ENCODE measurements at regions of chr2 and their contacts with region 1.

Region 1: DNA sequence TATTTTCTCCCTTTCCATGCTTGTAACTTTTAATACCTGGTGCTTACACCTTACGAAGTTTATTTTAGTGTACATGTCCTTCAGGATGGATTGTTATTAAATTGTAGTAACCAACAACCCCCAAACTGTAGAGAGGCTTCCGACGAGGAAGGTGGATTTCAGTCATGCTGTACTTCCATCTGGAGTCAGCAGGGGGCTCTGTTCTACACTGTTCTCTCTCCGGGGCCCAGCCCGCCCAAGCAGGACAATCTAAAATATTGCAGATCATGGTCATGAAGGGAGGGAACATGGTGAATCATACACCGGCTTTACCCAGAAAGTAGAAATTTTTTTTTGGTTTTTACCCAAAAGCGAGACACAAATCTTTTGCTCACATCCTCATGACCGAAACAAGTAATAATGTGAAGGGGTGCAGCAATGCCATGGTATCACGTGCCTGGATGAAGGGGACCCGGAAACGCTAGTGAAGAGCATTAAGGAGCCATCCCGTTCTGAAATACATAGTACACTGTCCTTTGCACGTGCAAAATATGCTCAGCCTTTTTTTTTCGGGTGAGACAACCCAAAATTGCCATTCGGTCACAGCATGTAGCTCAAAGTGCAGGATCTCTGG is 884.8 kb downstream of the EPHA4 start:
- DNase-seq: peak; percentile 61 to 67
- H3K4me3 ChIP-seq: no peak overlapping the region
- H3K27ac ChIP-seq: no peak overlapping the region
- H3K4me1 ChIP-seq: no peaks in the 10 kb centered on the region
- H3K27me3 ChIP-seq: no peaks in the 10 kb centered on the region
- CTCF ChIP-seq: peak; percentile 65 to 75 (median 73)
- POLR2A ChIP-seq: no peak

Region 2: DNA sequence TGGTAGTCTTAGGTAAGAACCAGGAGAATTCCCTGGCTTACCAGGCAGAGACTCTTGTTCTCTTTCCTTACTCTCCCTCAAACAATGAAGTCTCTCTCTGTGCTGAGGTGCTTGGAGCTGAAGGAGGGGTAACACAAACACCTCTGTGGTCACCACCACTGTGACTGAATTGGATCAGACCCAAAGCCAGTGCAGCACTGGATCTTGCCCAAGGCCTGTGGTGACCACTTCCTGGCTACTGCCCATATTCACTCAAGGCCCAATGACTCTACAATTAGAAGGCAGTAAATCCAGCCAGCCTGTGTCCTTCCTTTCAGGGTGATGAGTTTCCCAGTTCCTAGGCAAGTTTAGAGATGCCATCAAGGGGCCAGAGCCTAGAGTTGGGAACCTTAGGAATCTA is 353.1 kb before region 1 on chr2:
- intact Hi-C with region 1: no loop called
- DNase-seq: no peak
- H3K4me3 ChIP-seq: no peak overlapping the region
- H3K27ac ChIP-seq: no peak overlapping the region
- H3K4me1 ChIP-seq: no peaks in the 10 kb centered on the region
- H3K27me3 ChIP-seq: no peaks in the 10 kb centered on the region
- CTCF ChIP-seq: no peak
- POLR2A ChIP-seq: no peak

Region 3: GRCh38 chr2:221573430-221574230 is 886.3 kb after region 1 on chr2:
- intact Hi-C with region 1: loop called (anchors 5 kb)
- DNase-seq: peak; percentile 80 to 86
- H3K4me3 ChIP-seq: peak overlapping the region; percentile 70 to 73
- H3K27ac ChIP-seq: peak overlapping the region; percentile 89 to 91
- H3K4me1 ChIP-seq: no peaks in the 10 kb centered on the region
- H3K27me3 ChIP-seq: no peaks in the 10 kb centered on the region
- CTCF ChIP-seq: peak; percentile 97 to 99 (median 98)
- POLR2A ChIP-seq: peak; percentile 21 to 32

Region 4: GRCh38 chr2:221972813-221973463 is 1285.6 kb after region 1 on chr2:
- intact Hi-C with region 1: loop called (anchors 10 kb)
- DNase-seq: no peak
- H3K4me3 ChIP-seq: no peak overlapping the region
- H3K27ac ChIP-seq: no peak overlapping the region
- H3K4me1 ChIP-seq: no peaks in the 10 kb centered on the region
- H3K27me3 ChIP-seq: no peaks in the 10 kb centered on the region
- CTCF ChIP-seq: no peak
- POLR2A ChIP-seq: no peak

Measured in uterus (tissue), 4 donors.